Calu3 (cell line): ENCODE measurements at regions of chr7 and their contacts with region 1.

Region 1: DNA sequence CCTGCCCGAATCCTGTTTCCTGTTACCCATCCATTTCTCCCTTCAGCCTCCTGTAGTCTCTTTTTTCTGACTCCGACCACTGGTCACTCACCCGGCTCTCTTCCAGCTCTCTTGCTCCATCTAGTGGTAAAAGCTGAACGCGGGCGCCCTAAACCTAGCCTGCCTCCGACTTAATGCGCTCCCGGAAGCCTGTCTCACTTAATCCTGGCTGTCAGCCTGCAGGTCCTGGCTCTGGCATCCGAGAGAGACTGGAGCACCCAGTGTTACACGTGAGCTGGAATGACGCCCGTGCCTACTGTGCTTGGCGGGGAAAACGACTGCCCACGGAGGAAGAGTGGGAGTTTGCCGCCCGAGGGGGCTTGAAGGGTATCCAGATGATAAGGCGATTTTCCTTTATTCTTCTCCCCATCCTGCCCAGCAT is 10.3 kb downstream of the SUMF2 start:
- DNase-seq: peak; percentile 95
- H3K4me3 Mint-ChIP-seq: no peak overlapping the region
- H3K27ac Mint-ChIP-seq: peak overlapping the region; percentile 16
- H3K4me1 Mint-ChIP-seq: peaks cover 16% of the 10 kb centered on the region
- H3K27me3 Mint-ChIP-seq: no peaks in the 10 kb centered on the region
- CTCF ChIP-seq: peak; percentile 98

Region 2: DNA sequence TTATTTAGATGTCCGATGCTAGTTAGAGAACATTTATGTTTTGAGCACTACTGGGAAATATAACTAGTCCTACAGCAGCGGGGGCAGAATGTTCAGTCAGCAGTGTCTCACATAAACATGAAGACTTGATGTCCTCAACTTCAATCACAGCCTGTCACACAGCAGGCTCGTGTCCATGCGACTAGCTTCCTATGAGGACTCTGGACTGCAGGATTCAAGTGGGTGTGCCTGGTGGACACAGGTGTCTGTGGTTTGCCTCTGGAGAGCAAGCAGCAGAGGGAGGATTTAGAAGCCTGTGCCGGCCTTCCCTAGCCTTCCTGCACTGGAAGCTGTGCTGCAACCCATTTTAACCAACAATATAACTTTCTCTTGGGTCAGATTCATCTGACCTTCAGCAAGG is 739.2 kb before region 1 on chr7:
- CTCF ChIA-PET with region 1: no interaction called
- intact Hi-C with region 1: no loop called
- DNase-seq: no peak
- H3K4me3 Mint-ChIP-seq: no peak overlapping the region
- H3K27ac Mint-ChIP-seq: no peak overlapping the region
- H3K4me1 Mint-ChIP-seq: no peaks in the 10 kb centered on the region
- H3K27me3 Mint-ChIP-seq: peaks cover 77% of the 10 kb centered on the region
- CTCF ChIP-seq: no peak

Region 3: GRCh38 chr7:55641273-55641691 is 433.1 kb before region 1 on chr7:
- CTCF ChIA-PET with region 1: interaction called, 8 read pairs
- intact Hi-C with region 1: loop called (anchors 1 kb)
- DNase-seq: peak; percentile 56
- H3K4me3 Mint-ChIP-seq: no peak overlapping the region
- H3K27ac Mint-ChIP-seq: no peak overlapping the region
- H3K4me1 Mint-ChIP-seq: no peaks in the 10 kb centered on the region
- H3K27me3 Mint-ChIP-seq: no peaks in the 10 kb centered on the region
- CTCF ChIP-seq: peak; percentile 82

Region 4: DNA sequence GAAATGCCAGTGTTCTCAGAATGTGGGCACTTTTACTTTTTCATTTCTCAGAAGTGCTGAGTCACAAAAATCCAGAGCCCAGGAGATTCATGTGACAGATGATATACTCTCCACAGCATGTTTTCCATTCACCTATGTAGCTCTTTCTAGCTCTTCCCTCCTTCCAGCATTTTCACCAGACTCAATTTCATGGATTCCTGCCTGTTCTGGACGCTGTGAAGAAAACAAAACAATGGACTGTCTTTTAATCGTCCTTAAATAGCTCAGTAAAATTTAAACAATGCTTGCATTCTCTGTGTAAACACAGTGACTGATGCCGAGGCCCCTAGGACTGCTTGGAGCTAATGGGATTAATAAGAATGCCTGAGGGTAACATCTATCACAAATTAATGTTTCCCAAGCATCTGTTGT is 161.6 kb before region 1 on chr7:
- CTCF ChIA-PET with region 1: no interaction called
- intact Hi-C with region 1: no loop called
- DNase-seq: no peak
- H3K4me3 Mint-ChIP-seq: no peak overlapping the region
- H3K27ac Mint-ChIP-seq: no peak overlapping the region
- H3K4me1 Mint-ChIP-seq: no peaks in the 10 kb centered on the region
- H3K27me3 Mint-ChIP-seq: no peaks in the 10 kb centered on the region
- CTCF ChIP-seq: no peak

Region 5: DNA sequence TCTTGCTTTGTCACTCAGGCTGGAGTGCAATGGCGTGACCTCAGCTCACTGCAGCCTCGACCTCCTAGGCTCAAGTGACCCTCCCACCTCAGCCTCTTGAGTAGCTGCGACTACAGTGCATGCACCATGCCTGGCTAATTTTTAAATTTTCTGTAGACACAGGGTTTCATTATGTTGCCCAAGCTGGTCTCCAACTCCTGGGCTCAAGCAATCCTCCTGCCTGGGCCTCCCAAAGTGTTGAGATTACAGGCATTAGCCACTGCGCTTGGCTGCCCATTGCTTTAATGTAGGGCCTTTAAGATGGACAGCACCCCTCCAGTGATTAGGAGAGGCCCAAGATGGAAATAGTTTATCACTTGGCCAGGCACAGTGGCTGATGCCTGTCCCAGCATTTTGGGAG is 70.6 kb before region 1 on chr7:
- CTCF ChIA-PET with region 1: interaction called, 7 read pairs
- intact Hi-C with region 1: loop called (anchors 1 kb)
- DNase-seq: no peak
- H3K4me3 Mint-ChIP-seq: no peak overlapping the region
- H3K27ac Mint-ChIP-seq: no peak overlapping the region
- H3K4me1 Mint-ChIP-seq: peaks cover 20% of the 10 kb centered on the region
- H3K27me3 Mint-ChIP-seq: no peaks in the 10 kb centered on the region
- CTCF ChIP-seq: no peak

Region 6: DNA sequence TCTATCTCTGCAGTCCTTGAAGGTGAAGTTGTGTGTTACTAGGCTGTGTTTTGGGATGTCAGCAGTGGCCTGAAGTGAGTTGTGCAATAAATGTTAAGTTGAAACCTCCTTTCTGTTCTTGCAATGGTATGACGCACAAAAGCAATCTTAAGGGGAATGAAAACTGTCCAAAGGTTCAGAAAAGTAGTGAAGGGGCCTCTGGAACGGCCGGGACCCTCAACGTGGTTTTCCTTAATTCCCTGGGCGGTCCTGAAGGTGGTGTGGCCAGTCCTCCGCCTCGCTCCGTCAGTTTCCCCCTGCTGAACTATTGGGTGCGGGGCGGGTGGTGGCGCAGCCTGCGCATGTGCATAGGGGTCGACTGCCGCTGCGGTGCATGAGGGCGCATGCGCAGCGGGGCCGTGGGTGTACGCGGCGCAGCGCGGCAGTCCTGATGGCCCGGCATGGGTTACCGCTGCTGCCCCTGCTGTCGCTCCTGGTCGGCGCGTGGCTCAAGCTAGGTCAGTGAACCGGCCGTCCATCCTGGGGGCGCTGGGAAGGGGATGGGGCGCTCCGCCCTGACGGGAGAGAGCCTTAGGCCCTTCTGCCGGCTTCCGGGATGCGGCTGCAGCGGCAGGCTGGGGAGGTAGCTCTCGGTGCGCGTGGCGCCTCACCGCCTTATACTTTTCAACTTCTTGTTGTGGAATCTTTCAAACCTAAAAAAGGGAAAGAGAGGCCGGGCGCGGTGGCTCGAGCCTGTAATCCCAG is 10.3 kb before region 1 on chr7 and contains the start of gene SUMF2:
- CTCF ChIA-PET with region 1: interaction called, 15 read pairs
- intact Hi-C with region 1: no loop called
- DNase-seq: peak; percentile 96
- H3K4me3 Mint-ChIP-seq: peak within 1 kb of the TSS; percentile 84
- H3K27ac Mint-ChIP-seq: peak within 1 kb of the TSS; percentile 90
- H3K4me1 Mint-ChIP-seq: peaks cover 51% of the 10 kb centered on the region
- H3K27me3 Mint-ChIP-seq: no peaks in the 10 kb centered on the region
- CTCF ChIP-seq: no peak
- total RNA-seq, gene SUMF2: 226 and 255 TPM in 2 replicates

Region 7: DNA sequence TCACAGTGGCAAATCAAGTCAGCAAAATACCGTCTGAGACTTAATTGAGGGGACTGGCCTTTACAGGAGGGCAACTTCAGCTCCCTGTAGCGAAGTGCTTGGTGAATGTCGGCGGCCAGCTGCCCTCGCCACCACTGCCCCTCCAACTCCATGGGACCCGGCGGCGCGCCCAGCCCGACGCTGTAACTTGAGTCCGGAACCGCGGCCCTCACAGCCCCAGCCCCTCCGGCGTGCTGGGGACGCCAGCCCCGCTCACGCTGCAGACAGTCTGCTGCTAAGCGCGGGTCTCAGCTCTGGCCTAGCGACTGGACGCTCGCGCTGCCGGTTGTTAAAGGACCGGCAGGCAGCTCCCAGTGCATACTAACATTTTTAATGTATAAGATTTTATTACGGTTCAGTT is 155.2 kb after region 1 on chr7:
- CTCF ChIA-PET with region 1: no interaction called
- intact Hi-C with region 1: no loop called
- DNase-seq: no peak
- H3K4me3 Mint-ChIP-seq: no peak overlapping the region
- H3K27ac Mint-ChIP-seq: no peak overlapping the region
- H3K4me1 Mint-ChIP-seq: no peaks in the 10 kb centered on the region
- H3K27me3 Mint-ChIP-seq: no peaks in the 10 kb centered on the region
- CTCF ChIP-seq: no peak

Region 8: DNA sequence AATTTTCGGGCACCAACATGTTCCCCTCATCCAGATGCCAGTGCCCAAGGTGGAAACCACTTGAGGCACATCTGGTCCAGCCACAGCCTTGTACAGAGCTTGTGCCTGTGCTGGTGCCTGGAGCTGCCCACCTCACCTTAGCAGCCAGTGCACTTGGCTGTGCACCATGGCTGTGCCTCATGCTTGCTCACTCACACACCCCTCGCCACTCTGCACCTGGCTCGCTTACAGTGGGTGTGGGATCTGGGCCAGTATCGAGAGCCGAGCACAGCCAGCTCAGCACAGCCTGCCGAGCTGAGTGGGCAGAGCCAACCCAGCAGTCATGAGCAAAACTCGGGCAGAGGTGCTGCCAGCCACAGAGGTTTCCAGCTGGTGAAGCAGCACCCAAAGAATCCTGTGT is 181.7 kb after region 1 on chr7:
- CTCF ChIA-PET with region 1: no interaction called
- intact Hi-C with region 1: no loop called
- DNase-seq: no peak
- H3K4me3 Mint-ChIP-seq: no peak overlapping the region
- H3K27ac Mint-ChIP-seq: no peak overlapping the region
- H3K4me1 Mint-ChIP-seq: no peaks in the 10 kb centered on the region
- H3K27me3 Mint-ChIP-seq: no peaks in the 10 kb centered on the region
- CTCF ChIP-seq: no peak